ENCODE measurements at regions of chr1 and their contacts with region 1.

Region 1: GRCh38 chr1:39258146-39258924 is 53.8 kb downstream of the MACF1 start:
- DNase-seq: peak; percentile 71
- ATAC-seq: peak; percentile 82 to 85

Region 2: DNA sequence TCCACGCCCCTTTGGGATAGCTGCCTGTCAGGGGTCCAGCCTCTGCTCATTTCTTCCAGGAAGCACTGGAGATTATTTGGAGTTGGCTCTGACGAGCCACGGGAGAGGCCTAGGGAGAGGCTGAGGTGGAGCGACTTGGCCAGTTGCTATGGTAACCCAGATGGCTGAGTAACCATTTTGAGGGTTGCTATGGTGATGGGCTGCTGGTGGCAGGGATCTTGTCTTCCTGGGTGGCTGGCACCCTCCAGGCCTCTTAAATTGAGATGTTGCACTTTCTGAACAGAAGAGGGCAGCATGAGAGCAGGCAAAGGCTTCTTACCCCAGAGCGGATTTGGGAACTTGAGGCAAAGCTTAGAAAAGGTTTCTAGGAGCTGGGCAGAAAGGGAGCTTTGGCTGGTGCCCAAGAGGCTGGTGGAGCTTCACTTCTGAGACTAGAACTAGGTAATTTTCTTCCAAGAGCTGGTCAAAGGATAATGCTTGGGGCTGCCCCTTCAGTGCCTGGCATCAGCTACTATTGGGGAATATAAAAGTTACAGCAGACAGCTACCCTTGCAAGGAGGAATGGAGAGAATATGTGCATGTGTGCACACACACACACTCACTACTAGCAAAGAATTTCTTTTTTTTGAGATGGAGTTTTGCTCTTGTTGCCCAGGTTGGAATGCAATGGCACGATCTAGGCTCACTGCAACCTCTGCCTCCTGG is 159.6 kb before region 1 on chr1:
- intact Hi-C with region 1: loop called (anchors 5 to 10 kb)
- DNase-seq: peak; percentile 63
- ATAC-seq: peak; percentile 68 to 73

Region 3: GRCh38 chr1:39204441-39205081 is 53.8 kb before region 1 on chr1 and contains the start of gene MACF1:
- intact Hi-C with region 1: loop called in 1 of 2 experiments (anchors 5 kb)
- DNase-seq: peak; percentile 75
- ATAC-seq: peak; percentile 86 to 90
- total RNA-seq, gene MACF1: 263 to 280 TPM

Region 4: GRCh38 chr1:39538588-39539465 is 280.5 kb after region 1 on chr1:
- intact Hi-C with region 1: no loop called
- DNase-seq: peak; percentile 76
- ATAC-seq: peak; percentile 84 to 87